ENCODE measurements at regions of chr10 and their contacts with region 1.

Region 1: DNA sequence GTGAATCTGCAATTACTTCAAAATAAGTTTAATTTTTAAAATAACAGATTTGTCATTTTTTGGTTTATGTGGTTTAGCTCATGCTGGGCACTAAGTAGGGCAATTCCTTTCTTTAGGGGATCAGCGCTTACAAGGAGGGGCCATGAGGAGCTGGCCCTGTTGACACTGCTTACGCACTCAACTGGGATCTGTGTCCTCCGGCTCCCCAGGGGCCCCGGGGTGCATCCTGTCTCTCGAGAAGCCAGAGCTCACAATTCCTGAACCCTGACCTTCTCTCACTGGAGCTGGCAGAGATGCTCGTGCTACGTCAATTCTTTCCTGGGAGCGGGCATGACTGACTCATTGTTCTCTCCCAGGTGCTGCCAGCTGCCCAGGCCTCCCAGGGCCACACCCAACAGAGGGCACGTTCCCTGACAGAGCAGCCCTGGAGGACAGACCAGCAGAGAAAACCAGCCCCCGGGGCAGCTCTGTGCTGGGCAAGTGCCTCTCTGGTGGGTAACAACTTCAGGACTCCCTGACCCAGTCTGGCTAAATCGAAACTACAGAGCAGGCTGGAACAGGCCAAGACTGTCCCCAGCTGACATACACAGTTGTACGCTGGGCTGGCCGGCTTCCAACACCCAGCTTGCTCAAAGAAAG is 36.8 kb downstream of the CTBP2 start:
- DNase-seq: peak; percentile 68 to 88
- H3K4me3 ChIP-seq: peak overlapping the region; percentile 39 to 53
- H3K27ac ChIP-seq: peak overlapping the region; percentile 76 to 82
- H3K4me1 ChIP-seq: peaks cover 2 to 63% of the 10 kb centered on the region in 2 donors
- H3K27me3 ChIP-seq: no peaks in the 10 kb centered on the region
- CTCF ChIP-seq: no peak

Region 2: GRCh38 chr10:125144693-125145623 is 21.4 kb after region 1 on chr10:
- intact Hi-C with region 1: loop called (anchors 2 kb)
- DNase-seq: no peak
- H3K4me3 ChIP-seq: no peak overlapping the region
- H3K27ac ChIP-seq: peak overlapping the region; percentile 30 to 89
- H3K4me1 ChIP-seq: peaks cover 29 to 71% of the 10 kb centered on the region in 2 donors
- H3K27me3 ChIP-seq: no peaks in the 10 kb centered on the region
- CTCF ChIP-seq: peak; percentile 22 to 52 (median 24)

Region 3: DNA sequence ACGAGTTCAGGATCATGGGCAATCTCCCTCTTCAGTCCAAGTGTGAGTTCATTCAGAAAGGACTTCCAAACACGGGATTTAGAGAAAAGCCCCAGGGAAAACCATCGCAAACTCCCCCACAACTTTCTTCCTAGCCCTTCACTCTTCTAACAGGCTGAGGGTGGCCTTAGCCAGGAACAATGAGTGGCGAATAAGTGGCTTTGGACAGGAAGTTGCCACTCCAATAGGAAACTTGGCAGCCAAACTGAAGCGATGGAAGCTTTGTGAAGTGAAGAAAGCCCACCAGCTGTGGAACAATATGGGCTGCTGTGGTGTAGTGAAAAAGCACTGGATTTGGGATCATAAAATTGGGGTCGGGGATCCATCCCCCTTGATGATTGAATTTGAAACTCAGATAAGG is 366.1 kb after region 1 on chr10:
- intact Hi-C with region 1: no loop called
- DNase-seq: no peak
- H3K4me3 ChIP-seq: no peak overlapping the region
- H3K27ac ChIP-seq: no peak overlapping the region
- H3K4me1 ChIP-seq: no peaks in the 10 kb centered on the region
- H3K27me3 ChIP-seq: no peaks in the 10 kb centered on the region
- CTCF ChIP-seq: no peak